Cardiac septum (tissue), 1 donor: ENCODE measurements at regions of chr9 and their contacts with region 1.

Region 1: GRCh38 chr9:93207326-93207814 is 23.4 kb downstream of the WNK2 start:
- DNase-seq: no peak

Region 2: DNA sequence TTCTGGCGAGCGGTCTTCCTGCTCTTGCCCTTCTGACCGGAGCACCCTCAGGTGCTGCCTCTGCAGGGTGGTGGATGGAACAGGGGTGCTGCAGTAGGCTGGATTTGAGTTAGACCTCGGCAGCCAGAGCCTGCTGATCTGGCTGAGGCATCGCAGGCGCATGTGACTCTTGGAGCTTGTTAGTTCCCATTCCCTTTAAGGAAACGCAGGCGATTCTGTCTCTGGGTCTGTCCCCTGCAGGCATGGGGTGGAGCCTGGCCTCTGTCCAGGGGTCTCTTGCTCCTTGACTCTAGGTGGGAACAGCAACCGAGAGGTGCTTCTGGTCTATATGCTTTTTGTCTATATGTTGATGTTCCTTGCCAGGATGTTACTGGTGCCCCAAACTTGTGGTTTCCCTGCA is 20.3 kb before region 1 on chr9:
- intact Hi-C with region 1: loop called (anchors 1 kb)
- DNase-seq: peak; percentile 83

Region 3: DNA sequence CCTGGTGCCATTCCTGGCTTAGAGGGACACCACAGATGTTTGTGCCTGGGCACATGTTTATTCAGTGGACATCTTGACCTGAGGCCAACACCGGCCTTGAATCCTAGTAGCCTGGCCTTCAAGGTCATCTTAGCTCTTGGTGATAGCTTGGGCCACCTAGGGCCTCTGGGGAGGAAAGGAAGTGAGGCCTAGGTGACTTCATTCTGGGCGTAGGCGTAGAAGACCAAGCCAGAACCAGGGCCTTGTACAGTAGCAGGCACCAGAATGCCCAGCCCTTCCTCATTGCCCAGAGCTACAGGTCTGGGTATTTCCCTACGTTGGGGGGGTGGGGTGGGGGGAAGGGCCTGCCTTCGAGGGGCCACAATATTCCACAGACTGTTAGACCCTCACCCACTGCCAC is 10.3 kb after region 1 on chr9:
- intact Hi-C with region 1: loop called (anchors 1 kb)
- DNase-seq: no peak